Panc1 (cell line): ENCODE measurements at regions of chr6 and their contacts with region 1.

Region 1: DNA sequence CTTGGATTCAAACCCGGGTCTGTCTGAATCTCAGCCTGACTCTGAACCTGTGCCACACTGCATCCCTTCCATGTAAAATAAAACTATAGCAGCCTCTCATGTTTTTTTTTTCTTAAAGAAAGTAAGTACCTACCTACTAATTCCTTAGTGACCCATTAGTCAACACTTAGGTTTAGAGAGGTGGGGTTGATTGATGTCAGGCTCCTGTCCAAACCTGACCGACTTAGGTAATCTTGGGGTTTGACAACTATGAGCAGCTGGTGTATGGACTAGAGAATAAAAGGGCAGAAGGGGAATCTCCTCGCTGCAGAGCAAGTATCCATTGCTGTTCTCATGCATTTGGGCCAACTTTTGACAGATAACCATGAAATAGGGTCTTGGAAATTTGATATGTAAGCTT is 6.5 kb downstream of the NKAIN2 start:
- DNase-seq: no peak
- ATAC-seq: no peak
- H3K4me3 ChIP-seq: no peak overlapping the region
- H3K27ac ChIP-seq: peak overlapping the region; percentile 35; the same call in 1 of the 2 replicates
- H3K4me1 ChIP-seq: peaks cover 34% of the 10 kb centered on the region
- H3K27me3 ChIP-seq: no peaks in the 10 kb centered on the region
- CTCF ChIP-seq: no peak

Region 2: DNA sequence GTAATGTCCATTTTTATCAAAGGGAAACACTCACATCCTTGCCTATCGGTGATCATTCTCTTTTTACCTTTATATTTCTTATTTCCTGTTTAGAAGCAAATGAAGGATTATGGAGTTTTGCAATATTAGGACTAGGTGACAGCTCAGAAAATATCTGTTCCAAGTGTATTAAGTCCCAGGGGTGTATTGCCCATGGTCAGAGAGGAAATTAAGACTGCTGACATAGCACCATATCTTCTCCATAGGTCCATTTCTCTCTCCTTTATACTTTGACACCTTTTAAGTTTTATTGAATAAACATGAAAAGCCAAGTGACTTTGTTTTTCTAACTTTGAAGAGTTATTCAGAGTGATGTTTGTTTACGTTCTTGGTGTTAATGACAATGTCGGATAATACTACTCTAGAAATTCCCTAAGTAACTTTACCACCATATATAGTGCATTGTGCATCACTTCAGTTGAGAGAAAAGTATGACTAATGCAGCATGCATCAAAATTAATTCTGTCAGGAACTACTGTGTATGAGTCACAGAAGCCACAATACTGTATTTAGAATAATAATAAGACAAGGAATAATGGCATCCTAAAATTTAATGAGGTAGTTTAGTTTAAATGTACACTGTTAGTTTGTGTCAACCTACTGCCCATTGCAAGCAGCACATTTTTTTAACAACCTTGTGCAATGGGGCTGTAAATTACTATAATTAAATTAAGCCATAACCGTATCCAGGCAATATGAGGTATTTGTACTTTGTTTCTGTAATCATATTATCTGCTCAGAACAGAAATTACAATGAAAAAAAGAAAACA is 677.6 kb after region 1 on chr6:
- CTCF ChIA-PET with region 1: no interaction called
- POLR2A ChIA-PET with region 1: interaction called, 11 read pairs
- in situ Hi-C with region 1: no loop called
- intact Hi-C with region 1: no loop called
- DNase-seq: peak; percentile 65
- ATAC-seq: peak; percentile 98
- H3K4me3 ChIP-seq: no peak overlapping the region
- H3K27ac ChIP-seq: peak overlapping the region; percentile 71
- H3K4me1 ChIP-seq: no peaks in the 10 kb centered on the region
- H3K27me3 ChIP-seq: no peaks in the 10 kb centered on the region
- CTCF ChIP-seq: no peak